ENCODE measurements at regions of chr14 and their contacts with region 1.

Region 1: GRCh38 chr14:74612350-74613021 is 449 bp upstream of the LTBP2 start:
- DNase-seq: peak; percentile 79 to 89 (median 85)
- H3K4me3 ChIP-seq: peak overlapping the region; percentile 63
- H3K4me3 Mint-ChIP-seq: peak overlapping the region; percentile 40 to 89 (median 77)
- H3K27ac ChIP-seq: peak overlapping the region; percentile 21
- H3K27ac Mint-ChIP-seq: no peak overlapping the region
- H3K4me1 ChIP-seq: peaks cover 11% of the 10 kb centered on the region
- H3K4me1 Mint-ChIP-seq: peaks cover 47 to 62% (median 50%) of the 10 kb centered on the region in 3 donors
- H3K27me3 ChIP-seq: no peaks in the 10 kb centered on the region
- H3K27me3 Mint-ChIP-seq: peaks cover 0 to 8% of the 10 kb centered on the region in 2 donors

Region 2: GRCh38 chr14:74599321-74599761 is 13.1 kb before region 1 on chr14:
- CTCF ChIA-PET with region 1: interaction called, 15 read pairs
- POLR2A ChIA-PET with region 1: no interaction called
- DNase-seq: no peak
- H3K4me3 ChIP-seq: no peak overlapping the region
- H3K4me3 Mint-ChIP-seq: no peak overlapping the region
- H3K27ac ChIP-seq: no peak overlapping the region
- H3K27ac Mint-ChIP-seq: no peak overlapping the region
- H3K4me1 ChIP-seq: no peaks in the 10 kb centered on the region
- H3K4me1 Mint-ChIP-seq: no peaks in the 10 kb centered on the region
- H3K27me3 ChIP-seq: no peaks in the 10 kb centered on the region
- H3K27me3 Mint-ChIP-seq: peaks cover 3 to 4% of the 10 kb centered on the region in 2 donors

Region 3: DNA sequence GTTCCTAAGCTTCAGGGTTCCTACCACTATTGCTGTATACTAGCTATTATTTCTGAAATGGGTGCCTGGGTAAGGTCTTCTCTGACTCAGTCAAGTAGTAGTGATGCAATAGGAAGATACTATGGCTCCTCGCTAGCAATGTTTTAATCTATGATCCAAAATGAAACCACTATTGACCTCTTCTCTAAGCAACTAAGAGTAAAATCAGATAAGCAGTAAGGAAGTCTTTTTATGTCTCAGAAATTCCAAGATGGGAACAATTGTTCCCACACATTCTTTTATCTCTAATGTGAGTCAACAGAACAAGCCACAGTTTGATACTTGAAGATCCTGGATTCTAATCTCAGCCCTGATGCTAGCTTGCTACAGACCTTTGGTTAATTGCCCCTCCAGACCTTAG is 55.3 kb after region 1 on chr14:
- CTCF ChIA-PET with region 1: interaction called, 13 read pairs
- POLR2A ChIA-PET with region 1: no interaction called
- DNase-seq: no peak
- H3K4me3 ChIP-seq: no peak overlapping the region
- H3K4me3 Mint-ChIP-seq: no peak overlapping the region
- H3K27ac ChIP-seq: no peak overlapping the region
- H3K27ac Mint-ChIP-seq: peak overlapping the region in 1 of 8 donors; percentile 72
- H3K4me1 ChIP-seq: no peaks in the 10 kb centered on the region
- H3K4me1 Mint-ChIP-seq: peaks cover 0 to 2% (median 0%) of the 10 kb centered on the region in 3 donors
- H3K27me3 ChIP-seq: no peaks in the 10 kb centered on the region
- H3K27me3 Mint-ChIP-seq: no peaks in the 10 kb centered on the region

Region 4: GRCh38 chr14:74762917-74763802 is 150.7 kb after region 1 on chr14 and contains the start of gene YLPM1:
- CTCF ChIA-PET with region 1: interaction called, 19 read pairs
- POLR2A ChIA-PET with region 1: interaction called, 5 read pairs
- DNase-seq: peak; percentile 87 to 96 (median 95)
- H3K4me3 ChIP-seq: peak within 1 kb of the TSS; percentile 72
- H3K4me3 Mint-ChIP-seq: peak within 1 kb of the TSS; percentile 78 to 92 (median 85)
- H3K27ac ChIP-seq: peak within 1 kb of the TSS; percentile 87
- H3K27ac Mint-ChIP-seq: peak within 1 kb of the TSS; percentile 88 to 99 (median 96)
- H3K4me1 ChIP-seq: peaks cover 31% of the 10 kb centered on the region
- H3K4me1 Mint-ChIP-seq: peaks cover 47 to 56% (median 55%) of the 10 kb centered on the region in 3 donors
- H3K27me3 ChIP-seq: no peaks in the 10 kb centered on the region
- H3K27me3 Mint-ChIP-seq: no peaks in the 10 kb centered on the region
- total RNA-seq, gene YLPM1: 52.2 to 53.8 TPM

Region 5: DNA sequence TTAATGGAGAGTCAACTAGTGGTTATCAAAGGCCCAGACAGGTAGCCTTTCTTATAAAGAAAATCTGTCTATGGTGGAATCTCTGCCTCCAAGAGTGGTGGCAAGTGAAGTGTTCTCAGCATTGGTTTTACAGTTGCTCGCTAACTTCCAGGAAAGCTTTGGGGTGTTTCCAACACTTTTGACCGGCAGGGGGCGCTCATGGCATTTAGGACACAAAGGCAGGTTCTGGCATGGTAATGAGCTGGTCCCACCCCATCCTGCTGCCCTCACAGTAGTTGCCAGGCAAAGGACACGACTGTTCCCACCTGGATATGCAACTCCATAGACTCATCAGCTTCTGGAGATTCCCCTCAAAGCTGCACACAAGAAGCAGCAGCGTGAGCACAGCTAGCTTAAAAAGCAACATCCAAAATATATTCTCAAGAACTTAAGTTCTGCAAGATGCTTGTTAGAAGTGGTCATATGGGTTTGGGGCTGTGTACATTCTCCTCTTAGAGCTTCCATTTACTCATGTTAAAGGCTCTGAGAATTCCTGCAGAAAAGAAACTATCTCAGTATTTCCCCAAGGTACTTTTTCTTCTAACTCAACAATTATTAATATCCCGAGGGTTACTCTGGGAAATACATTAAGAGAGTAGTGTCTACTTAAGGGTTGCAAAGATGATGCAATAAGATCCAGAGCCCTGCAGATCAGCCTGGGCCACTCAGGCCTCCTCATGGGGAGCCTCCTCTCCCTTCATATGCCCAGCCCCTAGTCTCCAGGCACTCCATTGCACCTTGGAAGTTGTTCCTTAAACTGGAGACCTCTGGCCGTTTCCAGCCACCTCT is 248.6 kb after region 1 on chr14:
- CTCF ChIA-PET with region 1: interaction called, 14 read pairs
- POLR2A ChIA-PET with region 1: no interaction called
- DNase-seq: peak; percentile 76 to 92 (median 86)
- H3K4me3 ChIP-seq: no peak overlapping the region
- H3K4me3 Mint-ChIP-seq: no peak overlapping the region
- H3K27ac ChIP-seq: no peak overlapping the region
- H3K27ac Mint-ChIP-seq: no peak overlapping the region
- H3K4me1 ChIP-seq: peaks cover 8% of the 10 kb centered on the region
- H3K4me1 Mint-ChIP-seq: peaks cover 4 to 7% (median 6%) of the 10 kb centered on the region in 3 donors
- H3K27me3 ChIP-seq: no peaks in the 10 kb centered on the region
- H3K27me3 Mint-ChIP-seq: peaks cover 0 to 1% of the 10 kb centered on the region in 2 donors

Measured in CD8-positive, alpha-beta memory T cell (primary cell).